Naive thymus-derived CD4-positive, alpha-beta T cell (primary cell): ENCODE measurements at regions of chr19 and their contacts with region 1.

Region 1: GRCh38 chr19:13861732-13862531 is 15.0 kb upstream of the NANOS3 start:
- DNase-seq: peak; percentile 72 to 93 (median 83)
- ATAC-seq: peak; percentile 92
- H3K4me3 ChIP-seq: peak overlapping the region; percentile 79
- H3K4me3 Mint-ChIP-seq: peak overlapping the region; percentile 83 to 98 (median 94)
- H3K27ac ChIP-seq: peak overlapping the region; percentile 86
- H3K27ac Mint-ChIP-seq: peak overlapping the region; percentile 70 to 99 (median 93)
- H3K4me1 ChIP-seq: peaks cover 13 to 20% of the 10 kb centered on the region in 2 donors
- H3K4me1 Mint-ChIP-seq: peaks cover 21 to 42% (median 23%) of the 10 kb centered on the region in 7 donors
- H3K27me3 ChIP-seq: peaks cover 7 to 12% of the 10 kb centered on the region in 2 donors
- H3K27me3 Mint-ChIP-seq: peaks cover 19 to 32% (median 20%) of the 10 kb centered on the region in 5 donors

Region 2: DNA sequence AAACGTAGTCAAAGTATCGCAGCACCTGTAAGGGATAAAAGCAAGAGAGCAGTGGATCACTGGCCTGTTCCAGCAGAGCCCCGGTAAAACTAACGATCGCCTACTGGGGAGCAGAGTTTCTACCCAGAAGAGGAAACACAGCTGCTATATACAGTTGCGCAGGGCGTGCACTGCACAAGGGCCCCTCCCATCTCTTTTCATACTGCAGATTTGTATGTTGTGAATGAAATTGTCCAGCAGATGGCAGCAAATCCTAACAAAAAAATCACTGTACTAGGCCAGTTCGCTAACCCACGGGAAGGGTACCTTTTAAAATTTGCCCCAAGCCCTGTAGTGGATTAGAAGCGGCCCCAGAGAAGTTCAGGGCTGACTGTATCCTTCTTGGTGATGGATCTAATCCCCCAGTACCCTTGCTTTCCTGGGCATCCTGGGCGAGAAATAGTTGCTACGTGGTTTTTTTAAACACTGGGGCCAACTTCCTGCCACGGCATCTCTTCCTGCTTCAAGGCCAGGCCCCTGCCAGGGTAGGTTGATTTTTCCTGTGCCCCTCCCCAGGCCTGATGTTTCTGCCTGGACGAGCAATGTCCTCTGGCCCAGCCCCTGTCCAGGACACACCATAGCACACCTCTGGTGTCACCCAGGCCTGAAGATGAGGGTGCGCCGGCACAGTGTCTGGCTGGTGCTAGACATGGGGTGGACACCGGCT is 584.7 kb before region 1 on chr19:
- CTCF ChIA-PET with region 1: interaction called, 6 read pairs
- POLR2A ChIA-PET with region 1: no interaction called
- intact Hi-C with region 1: loop called in 1 of 2 experiments (anchors 5 kb)
- DNase-seq: peak; percentile 23 to 84 (median 79)
- ATAC-seq: peak; percentile 93
- H3K4me3 ChIP-seq: peak overlapping the region; percentile 41
- H3K4me3 Mint-ChIP-seq: peak overlapping the region; percentile 39 to 75 (median 64)
- H3K27ac ChIP-seq: peak overlapping the region; percentile 60
- H3K27ac Mint-ChIP-seq: peak overlapping the region; percentile 47 to 91 (median 84)
- H3K4me1 ChIP-seq: peaks cover 7% of the 10 kb centered on the region in 2 donors
- H3K4me1 Mint-ChIP-seq: peaks cover 8 to 33% (median 18%) of the 10 kb centered on the region in 7 donors
- H3K27me3 ChIP-seq: no peaks in the 10 kb centered on the region
- H3K27me3 Mint-ChIP-seq: peaks cover 0 to 10% (median 5%) of the 10 kb centered on the region in 5 donors

Region 3: DNA sequence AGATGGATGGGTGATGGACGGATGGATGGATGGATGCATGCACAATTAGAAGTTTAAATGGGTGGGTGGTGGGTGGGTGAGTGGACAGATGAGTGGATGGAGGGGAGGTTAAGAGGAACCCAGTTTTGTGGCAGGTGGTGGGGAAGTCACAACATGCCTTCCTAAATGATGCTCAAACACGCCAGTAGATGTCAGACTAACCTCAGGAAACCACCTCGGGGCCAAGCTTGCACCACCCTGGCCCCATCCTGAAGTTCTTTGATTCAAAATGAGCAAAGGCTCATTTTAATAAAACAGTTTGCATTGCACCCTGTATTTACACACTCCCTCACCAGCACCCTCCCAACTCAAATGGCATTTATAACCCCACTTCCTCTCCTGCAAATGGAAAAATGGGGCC is 264.3 kb before region 1 on chr19:
- CTCF ChIA-PET with region 1: interaction called, 6 read pairs
- POLR2A ChIA-PET with region 1: no interaction called
- intact Hi-C with region 1: loop called in 1 of 2 experiments (anchors 1 kb)
- DNase-seq: peak in 8 of 9 donors; percentile 10 to 54 (median 34)
- ATAC-seq: peak; percentile 73
- H3K4me3 ChIP-seq: no peak overlapping the region
- H3K4me3 Mint-ChIP-seq: no peak overlapping the region
- H3K27ac ChIP-seq: no peak overlapping the region
- H3K27ac Mint-ChIP-seq: no peak overlapping the region
- H3K4me1 ChIP-seq: no peaks in the 10 kb centered on the region
- H3K4me1 Mint-ChIP-seq: peaks cover 0 to 4% (median 0%) of the 10 kb centered on the region in 7 donors
- H3K27me3 ChIP-seq: peaks cover 0 to 4% of the 10 kb centered on the region in 2 donors
- H3K27me3 Mint-ChIP-seq: peaks cover 4 to 32% (median 31%) of the 10 kb centered on the region in 5 donors

Region 4: GRCh38 chr19:13774217-13775191 is 87.4 kb before region 1 on chr19 and contains the start of gene C19orf53:
- CTCF ChIA-PET with region 1: interaction called, 17 read pairs
- POLR2A ChIA-PET with region 1: interaction called, 11 read pairs
- intact Hi-C with region 1: no loop called
- DNase-seq: peak; percentile 74 to 89 (median 86)
- ATAC-seq: peak; percentile 99
- H3K4me3 ChIP-seq: peak within 1 kb of the TSS; percentile 94
- H3K4me3 Mint-ChIP-seq: peak within 1 kb of the TSS; percentile 90 to 100 (median 99)
- H3K27ac ChIP-seq: peak within 1 kb of the TSS; percentile 90
- H3K27ac Mint-ChIP-seq: peak within 1 kb of the TSS; percentile 92 to 100 (median 97)
- H3K4me1 ChIP-seq: peaks cover 9 to 15% of the 10 kb centered on the region in 2 donors
- H3K4me1 Mint-ChIP-seq: peaks cover 10 to 37% (median 28%) of the 10 kb centered on the region in 7 donors
- H3K27me3 ChIP-seq: no peaks in the 10 kb centered on the region
- H3K27me3 Mint-ChIP-seq: no peaks in the 10 kb centered on the region
- total RNA-seq, gene C19orf53: 57.2 to 108 (median 86.2) TPM

Region 5: DNA sequence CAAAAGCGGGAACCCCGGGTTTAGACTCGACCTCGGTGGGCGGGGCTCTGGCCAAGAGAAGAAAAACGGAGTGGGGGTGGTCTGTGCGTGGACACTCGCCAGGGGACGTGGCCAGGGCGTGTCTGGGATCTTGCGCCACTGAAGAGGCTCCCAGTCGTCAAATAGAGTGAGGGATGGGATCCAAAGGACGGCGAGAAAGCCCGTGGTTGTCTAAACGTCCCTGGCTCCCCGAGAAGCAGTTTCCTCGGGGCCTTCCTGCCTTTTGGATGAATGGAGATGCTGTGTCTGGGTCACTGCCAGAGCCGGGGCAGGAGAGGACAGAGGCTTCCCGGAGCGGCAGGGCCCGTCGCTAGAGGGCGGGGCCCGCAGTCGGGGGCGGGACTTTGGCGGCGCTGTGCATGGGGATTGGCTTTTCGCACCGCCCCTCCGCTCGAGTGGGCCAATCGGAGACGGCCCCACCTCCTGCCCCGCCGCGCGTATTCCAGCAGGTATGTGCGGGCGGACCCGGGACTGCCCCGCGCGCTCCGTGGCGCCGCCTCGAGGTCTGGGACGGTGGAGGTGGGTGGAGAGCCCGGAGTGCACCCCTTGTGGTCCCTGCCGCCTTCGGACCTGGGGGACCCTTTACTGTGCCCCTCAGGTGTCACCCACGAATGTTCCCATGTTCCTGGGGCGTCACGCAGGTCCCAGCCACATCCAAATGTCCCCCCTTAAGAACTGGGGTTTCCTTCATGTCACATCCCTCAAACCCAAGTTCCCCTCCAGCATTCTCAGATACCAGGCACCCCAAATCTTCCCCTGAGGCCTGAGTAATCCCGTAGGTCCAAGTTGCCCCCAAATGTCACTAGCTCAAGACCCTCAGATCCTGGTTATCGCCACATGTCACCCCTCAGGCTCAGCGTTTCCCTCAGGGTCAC is 28.3 kb before region 1 on chr19:
- CTCF ChIA-PET with region 1: interaction called, 13 read pairs
- POLR2A ChIA-PET with region 1: interaction called, 12 read pairs
- intact Hi-C with region 1: loop called in 1 of 2 experiments (anchors 1 kb)
- DNase-seq: peak; percentile 88 to 97 (median 92)
- ATAC-seq: peak; percentile 69
- H3K4me3 ChIP-seq: peak overlapping the region; percentile 70
- H3K4me3 Mint-ChIP-seq: peak overlapping the region; percentile 79 to 93 (median 88)
- H3K27ac ChIP-seq: peak overlapping the region; percentile 85
- H3K27ac Mint-ChIP-seq: peak overlapping the region; percentile 88 to 97 (median 91)
- H3K4me1 ChIP-seq: peaks cover 31 to 41% of the 10 kb centered on the region in 2 donors
- H3K4me1 Mint-ChIP-seq: peaks cover 15 to 41% (median 36%) of the 10 kb centered on the region in 7 donors
- H3K27me3 ChIP-seq: no peaks in the 10 kb centered on the region
- H3K27me3 Mint-ChIP-seq: no peaks in the 10 kb centered on the region

Region 6: DNA sequence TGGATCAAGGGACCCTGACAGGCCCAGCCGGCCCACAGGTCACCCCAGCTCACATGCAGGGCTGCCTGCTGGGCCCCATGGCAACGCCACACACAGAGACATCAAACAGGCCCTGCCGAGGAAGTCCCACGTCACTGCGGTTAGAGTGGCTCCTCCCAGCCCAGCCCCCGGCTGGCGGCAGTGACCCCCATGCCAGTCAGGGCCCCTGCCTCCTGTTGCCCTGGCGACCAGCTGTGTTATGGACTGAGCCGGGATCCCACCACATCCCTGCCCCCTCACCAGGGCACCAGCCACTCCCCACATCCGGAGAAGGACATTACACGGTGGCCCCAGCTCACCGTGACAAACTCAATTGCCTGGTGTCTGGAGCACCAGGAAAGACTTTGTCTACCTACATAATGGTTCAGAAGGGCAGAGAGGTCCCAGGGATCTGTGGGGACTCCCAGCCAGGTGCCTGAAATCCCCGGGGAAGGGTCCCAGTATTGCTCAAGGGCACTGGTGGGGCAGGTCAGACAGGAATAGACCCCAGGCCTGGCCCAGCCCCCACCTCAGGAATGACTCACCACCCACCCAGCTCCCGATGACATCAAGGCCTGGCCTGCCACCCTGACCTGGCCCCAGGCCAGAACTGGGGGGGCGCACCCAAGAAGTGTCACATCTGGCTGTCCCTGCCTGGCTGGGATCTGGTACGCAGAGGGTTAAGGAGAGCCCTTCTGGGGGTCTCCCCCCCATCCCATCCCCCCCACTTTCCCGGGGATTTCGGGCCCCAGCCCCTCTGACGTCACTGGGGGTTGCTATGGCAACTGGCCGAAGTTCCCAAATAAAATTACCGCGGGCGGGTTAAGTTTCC is 15.2 kb before region 1 on chr19:
- CTCF ChIA-PET with region 1: interaction called, 37 read pairs
- POLR2A ChIA-PET with region 1: interaction called, 20 read pairs
- intact Hi-C with region 1: loop called (anchors 1 kb)
- DNase-seq: peak; percentile 91 to 98 (median 97)
- ATAC-seq: peak; percentile 75
- H3K4me3 ChIP-seq: peak overlapping the region; percentile 72
- H3K4me3 Mint-ChIP-seq: peak overlapping the region; percentile 82 to 96 (median 90)
- H3K27ac ChIP-seq: peak overlapping the region; percentile 95
- H3K27ac Mint-ChIP-seq: peak overlapping the region; percentile 99 to 100 (median 100)
- H3K4me1 ChIP-seq: peaks cover 47 to 55% of the 10 kb centered on the region in 2 donors
- H3K4me1 Mint-ChIP-seq: peaks cover 19 to 62% (median 55%) of the 10 kb centered on the region in 7 donors
- H3K27me3 ChIP-seq: no peaks in the 10 kb centered on the region
- H3K27me3 Mint-ChIP-seq: peaks cover 0 to 3% (median 0%) of the 10 kb centered on the region in 5 donors